H1 (cell line): ENCODE measurements at regions of chr1 and their contacts with region 1.

Region 1: GRCh38 chr1:39919545-39919944 is 17.8 kb upstream of the MYCL start:
- DNase-seq: peak in 1 of 2 experiments; percentile 60
- H3K4me3 ChIP-seq: no peak overlapping the region
- H3K27ac ChIP-seq: no peak overlapping the region
- H3K4me1 ChIP-seq: peaks cover 7 to 12% (median 10%) of the 10 kb centered on the region in 4 experiments
- H3K27me3 ChIP-seq: peaks cover 0 to 5% (median under 1%) of the 10 kb centered on the region in 4 experiments; a peak in 3 of 7 replicates
- CTCF ChIP-seq: peak; percentile 21 to 89 (median 81)
- EP300 ChIP-seq: no peak
- POLR2A ChIP-seq: no peak
- RAD21 ChIP-seq: peak; percentile 91 to 96

Region 2: DNA sequence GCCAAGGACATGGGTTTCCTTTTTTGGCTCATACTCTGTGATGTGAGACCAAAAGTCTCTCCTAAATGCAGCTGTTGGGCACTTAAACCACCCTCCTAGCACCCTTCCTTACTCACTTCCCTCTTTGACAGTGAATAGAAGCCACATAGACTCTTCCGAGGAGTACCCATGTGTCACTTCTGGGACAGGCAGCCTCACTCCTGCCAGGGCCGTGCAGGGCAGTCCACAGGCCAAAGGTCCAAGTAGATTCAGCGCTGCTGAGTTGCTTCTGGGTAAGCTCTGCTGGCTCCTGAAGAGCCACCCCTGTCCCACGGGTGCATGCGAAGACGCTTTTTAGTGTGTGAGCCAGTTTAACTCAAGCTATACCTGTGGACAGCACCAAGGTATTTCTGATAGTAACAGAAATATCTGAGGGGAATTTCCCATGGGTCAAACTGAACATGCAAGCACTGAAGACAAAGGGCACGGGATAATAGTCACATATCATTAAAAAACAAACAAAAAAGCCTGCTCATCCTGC is 94.1 kb before region 1 on chr1:
- CTCF ChIA-PET with region 1: interaction called, 11 read pairs
- POLR2A ChIA-PET with region 1: interaction called, 3 read pairs
- DNase-seq: no peak
- H3K4me3 ChIP-seq: no peak overlapping the region
- H3K27ac ChIP-seq: no peak overlapping the region
- H3K4me1 ChIP-seq: no peaks in the 10 kb centered on the region
- H3K27me3 ChIP-seq: no peaks in the 10 kb centered on the region
- CTCF ChIP-seq: no peak
- EP300 ChIP-seq: no peak
- POLR2A ChIP-seq: no peak
- RAD21 ChIP-seq: no peak

Region 3: GRCh38 chr1:39901698-39902459 is 17.7 kb before region 1 on chr1 and contains the start of gene MYCL:
- CTCF ChIA-PET with region 1: interaction called, 184 read pairs
- POLR2A ChIA-PET with region 1: interaction called, 23 read pairs
- DNase-seq: peak; percentile 79 to 94
- H3K4me3 ChIP-seq: peak within 1 kb of the TSS; percentile 81 to 89 (median 84)
- H3K27ac ChIP-seq: no peak within 1 kb of the TSS
- H3K4me1 ChIP-seq: peaks cover 13 to 29% (median 17%) of the 10 kb centered on the region in 4 experiments; a peak in 6 of 7 replicates
- H3K27me3 ChIP-seq: peaks cover 3 to 12% (median 10%) of the 10 kb centered on the region in 4 experiments; a peak in 6 of 7 replicates
- CTCF ChIP-seq: peak; percentile 76 to 86 (median 76)
- EP300 ChIP-seq: peak; percentile 1 to 63; a peak in 1 of 3 replicates
- POLR2A ChIP-seq: peak in 1 of 2 experiments; percentile 18; a peak in 1 of 3 replicates
- RAD21 ChIP-seq: peak; percentile 57 to 77
- total RNA-seq, gene MYCL: 28.8 and 29.9 TPM in 2 replicates

Region 4: GRCh38 chr1:39949871-39950448 is 30.4 kb after region 1 on chr1:
- CTCF ChIA-PET with region 1: interaction called, 77 read pairs
- POLR2A ChIA-PET with region 1: interaction called, 4 read pairs
- DNase-seq: no peak
- H3K4me3 ChIP-seq: no peak overlapping the region
- H3K27ac ChIP-seq: no peak overlapping the region
- H3K4me1 ChIP-seq: peaks cover 0 to 6% (median 2%) of the 10 kb centered on the region in 4 experiments; a peak in 3 of 7 replicates
- H3K27me3 ChIP-seq: peaks cover 0 to 16% (median 12%) of the 10 kb centered on the region in 4 experiments; a peak in 5 of 7 replicates
- CTCF ChIP-seq: no peak
- EP300 ChIP-seq: no peak
- POLR2A ChIP-seq: no peak
- RAD21 ChIP-seq: no peak

Region 5: DNA sequence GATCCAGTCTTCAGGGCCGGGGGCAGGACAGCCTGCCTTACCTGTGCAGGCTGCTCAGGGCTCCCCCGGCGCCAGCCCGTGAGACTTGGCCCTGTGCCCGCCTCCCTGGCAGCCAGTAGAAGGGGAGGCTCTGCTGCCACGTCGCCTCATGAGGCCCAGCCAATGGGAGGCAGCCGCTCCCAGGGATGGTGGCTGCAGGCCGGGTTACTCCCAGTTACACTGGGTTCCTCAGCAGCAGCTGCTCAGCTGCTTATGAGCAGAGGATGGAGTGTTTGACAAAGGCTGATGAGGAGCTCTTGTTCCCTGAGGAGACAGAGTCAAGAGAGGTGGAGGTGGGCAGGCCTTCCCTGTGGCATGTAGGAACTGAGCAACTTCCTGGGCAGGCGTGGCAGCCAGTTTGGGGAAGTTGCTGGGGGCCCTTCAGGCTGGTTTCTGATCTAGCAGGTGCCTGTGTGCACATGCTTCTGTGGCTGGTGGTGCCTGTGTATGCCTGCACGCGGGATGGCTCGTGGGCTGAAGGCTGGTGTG is 41.0 kb after region 1 on chr1:
- CTCF ChIA-PET with region 1: interaction called, 263 read pairs
- POLR2A ChIA-PET with region 1: interaction called, 3 read pairs
- DNase-seq: no peak
- H3K4me3 ChIP-seq: no peak overlapping the region
- H3K27ac ChIP-seq: no peak overlapping the region
- H3K4me1 ChIP-seq: peaks cover 0 to 6% (median 5%) of the 10 kb centered on the region in 4 experiments; a peak in 6 of 7 replicates
- H3K27me3 ChIP-seq: no peaks in the 10 kb centered on the region; a peak in 1 of 7 replicates
- CTCF ChIP-seq: no peak
- EP300 ChIP-seq: no peak
- POLR2A ChIP-seq: no peak
- RAD21 ChIP-seq: no peak

Region 6: GRCh38 chr1:39981957-39982356 is 62.4 kb after region 1 on chr1:
- CTCF ChIA-PET with region 1: interaction called, 10 read pairs
- POLR2A ChIA-PET with region 1: interaction called, 5 read pairs
- DNase-seq: peak in 1 of 2 experiments; percentile 34
- H3K4me3 ChIP-seq: no peak overlapping the region
- H3K27ac ChIP-seq: no peak overlapping the region
- H3K4me1 ChIP-seq: peaks cover 0 to 10% (median 5%) of the 10 kb centered on the region in 4 experiments; a peak in 5 of 7 replicates
- H3K27me3 ChIP-seq: no peaks in the 10 kb centered on the region
- CTCF ChIP-seq: no peak
- EP300 ChIP-seq: no peak
- POLR2A ChIP-seq: no peak
- RAD21 ChIP-seq: no peak

Region 7: DNA sequence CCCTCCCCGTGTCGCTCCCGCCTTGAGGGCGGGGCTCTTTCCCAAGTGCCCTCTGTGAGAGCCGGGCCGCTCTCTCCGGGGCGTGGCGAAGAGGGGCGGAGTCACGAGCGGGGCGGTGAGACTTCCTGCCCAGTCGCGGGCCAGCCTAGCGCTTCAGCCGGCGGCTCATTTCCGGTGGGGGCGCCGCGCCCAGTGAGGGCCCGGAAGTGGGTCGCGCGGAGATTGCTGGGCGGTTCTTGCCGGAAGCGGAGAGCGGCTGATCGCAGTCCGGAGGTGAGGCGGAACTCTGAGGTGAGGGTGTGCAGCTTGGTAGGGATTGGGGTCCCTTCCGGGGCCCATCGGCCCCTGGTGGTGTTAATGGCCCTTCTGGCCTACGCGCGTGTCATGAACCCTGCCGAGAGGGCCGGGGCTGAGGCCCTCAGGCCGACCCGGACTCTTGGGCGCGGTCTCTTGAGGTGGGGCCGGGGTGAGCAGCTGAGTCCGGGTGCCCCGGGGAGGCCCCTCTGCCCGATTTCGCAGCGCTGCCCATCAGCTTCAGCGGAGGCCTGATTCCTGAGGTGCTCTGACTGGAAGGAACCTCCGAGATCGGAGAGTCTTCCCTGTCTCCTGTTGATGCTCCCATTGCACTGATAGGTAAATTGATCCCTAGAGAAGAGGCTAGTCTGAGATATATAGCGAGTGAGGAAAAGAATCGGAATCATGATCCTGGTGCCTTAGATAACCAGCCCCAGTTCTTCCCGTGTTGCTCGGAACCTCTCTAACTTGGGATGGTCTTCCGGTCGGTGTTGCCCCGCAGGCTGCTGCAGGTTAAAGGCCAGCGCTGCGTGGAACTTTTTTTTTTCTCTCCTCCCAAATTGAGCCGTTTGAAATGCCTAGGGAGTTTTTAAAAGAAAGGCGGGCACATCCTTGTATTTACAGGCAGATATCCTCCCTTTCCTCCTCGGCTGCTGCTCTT is 121.2 kb after region 1 on chr1 and contains the start of gene CAP1:
- CTCF ChIA-PET with region 1: interaction called, 134 read pairs
- POLR2A ChIA-PET with region 1: interaction called, 8 read pairs
- DNase-seq: peak; percentile 97 to 99
- H3K4me3 ChIP-seq: peak within 1 kb of the TSS; percentile 79 to 99 (median 93)
- H3K27ac ChIP-seq: peak within 1 kb of the TSS; percentile 96
- H3K4me1 ChIP-seq: peaks cover 3 to 7% (median 3%) of the 10 kb centered on the region in 4 experiments; a peak in 4 of 7 replicates
- H3K27me3 ChIP-seq: no peaks in the 10 kb centered on the region
- CTCF ChIP-seq: no peak
- EP300 ChIP-seq: no peak
- POLR2A ChIP-seq: peak in 1 of 2 experiments; percentile 4; a peak in 1 of 3 replicates
- RAD21 ChIP-seq: no peak
- total RNA-seq, gene CAP1: 274 and 295 TPM in 2 replicates

Region 8: GRCh38 chr1:40050863-40051262 is 131.3 kb after region 1 on chr1:
- CTCF ChIA-PET with region 1: no interaction called
- POLR2A ChIA-PET with region 1: no interaction called
- DNase-seq: no peak
- H3K4me3 ChIP-seq: no peak overlapping the region
- H3K27ac ChIP-seq: no peak overlapping the region
- H3K4me1 ChIP-seq: no peaks in the 10 kb centered on the region; a peak in 1 of 7 replicates
- H3K27me3 ChIP-seq: no peaks in the 10 kb centered on the region
- CTCF ChIP-seq: no peak
- EP300 ChIP-seq: no peak
- POLR2A ChIP-seq: no peak
- RAD21 ChIP-seq: no peak